CD4-positive, alpha-beta memory T cell (primary cell): ENCODE measurements at regions of chr5 and their contacts with region 1.

Region 1: DNA sequence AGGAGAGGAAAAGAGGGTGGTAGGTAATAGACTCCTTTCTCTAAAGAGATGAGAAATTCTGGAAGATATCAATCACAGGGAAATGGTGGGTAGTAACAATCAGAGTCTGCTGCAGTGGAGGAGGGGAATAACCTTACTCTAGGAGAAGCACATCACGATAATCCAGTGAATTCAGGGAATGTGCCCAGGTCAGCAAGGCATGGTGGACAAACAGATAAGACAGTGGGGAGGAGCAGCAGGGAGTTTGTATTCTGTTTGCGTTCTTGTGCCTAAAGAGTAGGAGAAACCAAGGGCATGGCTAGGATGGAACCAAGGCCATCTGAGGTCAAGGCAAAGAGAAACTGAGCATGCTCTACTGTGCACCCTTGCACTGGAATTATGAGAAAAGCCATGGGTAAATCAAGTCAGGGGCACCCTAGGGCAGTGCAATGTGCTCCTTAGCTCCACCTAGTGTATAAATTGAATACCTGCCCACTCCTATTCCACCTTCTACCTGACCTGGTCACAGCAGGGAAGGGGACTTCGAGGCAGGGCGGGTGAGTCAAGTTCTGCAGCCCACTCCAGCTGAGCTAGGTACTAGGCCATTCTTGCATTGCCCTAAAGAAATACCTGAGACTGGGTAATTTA is 31.6 kb downstream of the RETREG1 start:
- DNase-seq: no peak
- H3K4me3 ChIP-seq: no peak overlapping the region
- H3K4me3 Mint-ChIP-seq: no peak overlapping the region
- H3K27ac ChIP-seq: no peak overlapping the region
- H3K27ac Mint-ChIP-seq: peak overlapping the region in 1 of 7 donors; percentile 12
- H3K4me1 ChIP-seq: no peaks in the 10 kb centered on the region
- H3K4me1 Mint-ChIP-seq: peaks cover 13 to 64% (median 22%) of the 10 kb centered on the region in 4 donors
- H3K27me3 ChIP-seq: no peaks in the 10 kb centered on the region
- H3K27me3 Mint-ChIP-seq: no peaks in the 10 kb centered on the region

Region 2: DNA sequence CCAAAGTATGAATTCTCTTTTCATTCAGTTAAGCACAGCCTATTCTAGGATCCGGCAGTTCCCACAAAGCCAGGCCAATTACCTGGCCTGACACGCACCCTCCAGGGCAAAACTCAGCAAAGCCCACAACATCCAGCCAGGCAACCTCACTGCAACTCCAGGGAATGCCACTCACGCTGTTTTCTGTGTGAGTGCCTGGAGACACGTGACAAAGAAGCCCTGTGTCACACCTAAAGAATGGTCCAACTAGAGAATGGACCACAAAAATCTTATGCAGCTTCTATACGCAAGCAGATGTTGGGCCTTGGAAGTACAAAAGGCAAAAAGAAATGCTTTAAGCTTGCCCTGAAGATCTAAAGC is 11.4 kb after region 1 on chr5:
- CTCF ChIA-PET with region 1: interaction called, 17 read pairs
- POLR2A ChIA-PET with region 1: no interaction called
- intact Hi-C with region 1: no loop called
- DNase-seq: no peak
- H3K4me3 ChIP-seq: no peak overlapping the region
- H3K4me3 Mint-ChIP-seq: no peak overlapping the region
- H3K27ac ChIP-seq: no peak overlapping the region
- H3K27ac Mint-ChIP-seq: peak overlapping the region in 1 of 7 donors; percentile 39
- H3K4me1 ChIP-seq: no peaks in the 10 kb centered on the region
- H3K4me1 Mint-ChIP-seq: peaks cover 35 to 84% (median 44%) of the 10 kb centered on the region in 4 donors
- H3K27me3 ChIP-seq: no peaks in the 10 kb centered on the region
- H3K27me3 Mint-ChIP-seq: no peaks in the 10 kb centered on the region

Region 3: GRCh38 chr5:16666883-16667398 is 81.8 kb after region 1 on chr5:
- CTCF ChIA-PET with region 1: interaction called, 15 read pairs
- POLR2A ChIA-PET with region 1: no interaction called
- intact Hi-C with region 1: no loop called
- DNase-seq: peak in 4 of 5 donors; percentile 8 to 34 (median 22)
- H3K4me3 ChIP-seq: no peak overlapping the region
- H3K4me3 Mint-ChIP-seq: peak overlapping the region in 3 of 8 donors; percentile 8 to 75 (median 58)
- H3K27ac ChIP-seq: no peak overlapping the region
- H3K27ac Mint-ChIP-seq: peak overlapping the region in 1 of 7 donors; percentile 43
- H3K4me1 ChIP-seq: no peaks in the 10 kb centered on the region
- H3K4me1 Mint-ChIP-seq: peaks cover 0 to 3% (median 0%) of the 10 kb centered on the region in 4 donors
- H3K27me3 ChIP-seq: no peaks in the 10 kb centered on the region
- H3K27me3 Mint-ChIP-seq: peaks cover 0 to 5% of the 10 kb centered on the region in 2 donors